ENCODE measurements at regions of chr4 and their contacts with region 1.

Region 1: DNA sequence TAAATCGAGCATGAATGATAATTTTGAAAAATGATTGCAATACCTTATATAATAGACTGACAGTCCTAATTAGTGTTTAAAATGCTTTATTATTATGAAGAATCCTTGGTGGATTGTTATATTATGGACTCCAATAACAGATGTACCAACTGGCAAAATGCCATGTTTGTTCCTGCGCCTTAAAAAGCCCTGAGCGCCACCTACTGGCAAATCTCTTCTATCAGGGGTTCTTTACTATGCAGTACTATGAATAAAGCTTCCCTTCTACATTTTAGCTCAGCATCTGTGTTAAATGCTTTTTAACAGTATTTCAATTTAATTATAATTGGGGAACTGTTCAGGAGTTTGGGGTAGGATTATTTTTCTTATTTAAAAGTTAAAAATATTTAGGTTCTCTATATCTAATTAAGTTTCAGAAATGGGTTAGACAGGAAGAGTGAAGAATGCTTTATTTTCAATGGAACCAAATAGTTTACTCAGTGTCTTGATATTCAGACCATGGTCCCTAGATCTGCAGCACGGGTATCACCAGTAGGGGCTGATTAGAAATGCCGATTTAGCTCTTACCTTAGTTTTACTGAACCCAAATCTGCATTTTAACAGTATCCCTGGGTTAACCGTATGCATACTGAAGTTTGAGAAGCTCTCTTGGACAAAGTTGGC is 20.1 kb downstream of the CFAP97 start:
- DNase-seq: peak; percentile 71 to 80 (median 76)
- H3K4me3 ChIP-seq: no peak overlapping the region
- H3K4me3 Mint-ChIP-seq: no peak overlapping the region
- H3K27ac ChIP-seq: no peak overlapping the region
- H3K27ac Mint-ChIP-seq: no peak overlapping the region
- H3K4me1 ChIP-seq: peaks cover 15% of the 10 kb centered on the region
- H3K4me1 Mint-ChIP-seq: peaks cover 20 to 56% (median 34%) of the 10 kb centered on the region in 4 donors
- H3K27me3 ChIP-seq: no peaks in the 10 kb centered on the region
- H3K27me3 Mint-ChIP-seq: no peaks in the 10 kb centered on the region

Region 2: GRCh38 chr4:185039508-185040273 is 144.1 kb before region 1 on chr4:
- CTCF ChIA-PET with region 1: interaction called, 79 read pairs
- POLR2A ChIA-PET with region 1: no interaction called
- intact Hi-C with region 1: loop called (anchors 1 kb)
- DNase-seq: peak; percentile 46 to 60 (median 56)
- H3K4me3 ChIP-seq: no peak overlapping the region
- H3K4me3 Mint-ChIP-seq: peak overlapping the region in 3 of 8 donors; percentile 1 to 35 (median 33)
- H3K27ac ChIP-seq: no peak overlapping the region
- H3K27ac Mint-ChIP-seq: no peak overlapping the region
- H3K4me1 ChIP-seq: peaks cover 7% of the 10 kb centered on the region
- H3K4me1 Mint-ChIP-seq: peaks cover 4 to 6% (median 4%) of the 10 kb centered on the region in 4 donors
- H3K27me3 ChIP-seq: no peaks in the 10 kb centered on the region
- H3K27me3 Mint-ChIP-seq: peaks cover 9 to 16% of the 10 kb centered on the region in 2 donors

Region 3: DNA sequence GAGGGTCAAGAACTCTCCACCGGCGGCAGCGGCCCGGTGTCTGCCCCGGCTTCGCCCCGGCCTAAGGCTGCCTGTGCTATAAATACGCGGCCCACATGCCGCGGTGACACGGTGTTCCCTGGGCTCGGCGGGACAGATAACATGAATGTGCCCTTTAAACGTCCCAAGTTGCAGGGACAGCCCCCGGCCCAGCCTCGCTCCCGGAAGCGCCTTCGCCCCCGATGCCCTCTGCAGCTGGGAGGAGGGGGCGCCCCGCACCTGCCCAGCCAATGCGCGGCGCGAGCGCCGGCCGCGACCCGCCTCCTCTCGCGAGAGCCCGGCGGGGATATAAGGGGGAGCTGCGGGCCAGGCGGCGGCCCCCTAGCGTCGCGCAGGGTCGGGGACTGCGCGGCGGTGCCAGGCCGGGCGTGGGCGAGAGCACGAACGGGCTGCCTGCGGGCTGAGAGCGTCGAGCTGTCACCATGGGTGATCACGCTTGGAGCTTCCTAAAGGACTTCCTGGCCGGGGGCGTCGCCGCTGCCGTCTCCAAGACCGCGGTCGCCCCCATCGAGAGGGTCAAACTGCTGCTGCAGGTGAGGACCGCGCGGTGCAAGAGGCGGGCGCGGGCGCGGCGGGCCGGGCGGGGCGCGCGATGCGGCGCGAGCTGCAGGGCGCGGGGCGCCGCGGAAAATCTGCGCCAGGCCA is 40.7 kb before region 1 on chr4 and contains the start of gene SLC25A4:
- CTCF ChIA-PET with region 1: interaction called, 45 read pairs
- POLR2A ChIA-PET with region 1: no interaction called
- intact Hi-C with region 1: loop called (anchors 2 kb)
- DNase-seq: peak; percentile 77 to 83 (median 81)
- H3K4me3 ChIP-seq: peak within 1 kb of the TSS; percentile 40 to 57
- H3K4me3 Mint-ChIP-seq: peak within 1 kb of the TSS; percentile 87 to 98 (median 90)
- H3K27ac ChIP-seq: peak within 1 kb of the TSS; percentile 26
- H3K27ac Mint-ChIP-seq: peak within 1 kb of the TSS in 6 of 7 donors; percentile 69 to 89 (median 83)
- H3K4me1 ChIP-seq: peaks cover 15% of the 10 kb centered on the region
- H3K4me1 Mint-ChIP-seq: peaks cover 8 to 24% (median 16%) of the 10 kb centered on the region in 4 donors
- H3K27me3 ChIP-seq: peaks cover 6% of the 10 kb centered on the region
- H3K27me3 Mint-ChIP-seq: peaks cover 8 to 13% of the 10 kb centered on the region in 2 donors
- total RNA-seq, gene SLC25A4: 6.4 to 7.2 TPM

Region 4: GRCh38 chr4:185171373-185172071 is 12.2 kb before region 1 on chr4:
- CTCF ChIA-PET with region 1: interaction called, 40 read pairs
- POLR2A ChIA-PET with region 1: no interaction called
- intact Hi-C with region 1: no loop called
- DNase-seq: no peak
- H3K4me3 ChIP-seq: no peak overlapping the region
- H3K4me3 Mint-ChIP-seq: no peak overlapping the region
- H3K27ac ChIP-seq: no peak overlapping the region
- H3K27ac Mint-ChIP-seq: no peak overlapping the region
- H3K4me1 ChIP-seq: peaks cover 4% of the 10 kb centered on the region
- H3K4me1 Mint-ChIP-seq: peaks cover 4 to 23% (median 8%) of the 10 kb centered on the region in 4 donors
- H3K27me3 ChIP-seq: no peaks in the 10 kb centered on the region
- H3K27me3 Mint-ChIP-seq: no peaks in the 10 kb centered on the region

Region 5: DNA sequence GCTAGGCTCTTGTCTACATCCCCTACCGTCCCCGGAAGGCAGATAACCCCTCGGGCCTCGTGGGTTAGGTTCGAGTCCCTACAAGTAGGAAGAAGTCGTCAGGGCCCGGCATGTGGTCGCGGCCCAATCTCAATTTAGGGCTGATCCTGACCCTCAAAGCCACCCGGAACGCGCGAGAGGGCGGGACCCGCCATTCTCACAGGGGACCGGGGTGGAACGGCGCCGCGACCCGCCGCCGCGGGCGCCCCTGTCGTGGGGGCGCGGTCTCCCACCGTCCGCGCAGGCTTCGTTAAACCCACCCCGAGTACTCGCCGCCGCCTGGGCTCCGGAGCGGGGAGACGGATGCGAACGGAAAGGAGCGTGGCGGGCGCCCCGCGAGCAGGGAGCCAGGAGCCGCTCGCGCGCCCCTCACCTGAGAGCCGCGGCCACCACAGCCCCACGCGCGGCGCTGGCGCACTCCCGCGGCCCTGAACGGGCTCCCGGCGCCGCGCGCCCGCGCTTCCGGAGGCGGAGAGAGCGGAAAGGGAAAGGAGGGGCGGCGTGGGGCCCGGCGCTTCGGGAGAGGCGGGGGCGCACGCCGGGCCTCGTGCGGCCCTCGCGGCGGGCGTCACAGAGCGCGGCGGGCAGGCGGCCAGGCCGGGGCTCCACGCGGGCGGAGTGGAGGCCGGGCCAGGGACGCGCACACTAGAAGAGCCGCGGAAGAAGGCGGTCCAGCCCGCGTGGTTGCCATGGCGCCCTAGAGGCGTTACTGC is 19.9 kb after region 1 on chr4 and contains the start of gene CFAP97:
- CTCF ChIA-PET with region 1: interaction called, 26 read pairs
- POLR2A ChIA-PET with region 1: interaction called, 5 read pairs
- intact Hi-C with region 1: loop called (anchors 2 kb)
- DNase-seq: peak; percentile 88 to 90 (median 90)
- H3K4me3 ChIP-seq: peak within 1 kb of the TSS; percentile 47 to 83
- H3K4me3 Mint-ChIP-seq: peak within 1 kb of the TSS; percentile 91 to 99 (median 96)
- H3K27ac ChIP-seq: peak within 1 kb of the TSS; percentile 82
- H3K27ac Mint-ChIP-seq: peak within 1 kb of the TSS; percentile 98 to 99 (median 99)
- H3K4me1 ChIP-seq: peaks cover 48% of the 10 kb centered on the region
- H3K4me1 Mint-ChIP-seq: peaks cover 31 to 66% (median 48%) of the 10 kb centered on the region in 4 donors
- H3K27me3 ChIP-seq: no peaks in the 10 kb centered on the region
- H3K27me3 Mint-ChIP-seq: no peaks in the 10 kb centered on the region
- total RNA-seq, gene CFAP97: 41.6 to 41.9 TPM

Region 6: DNA sequence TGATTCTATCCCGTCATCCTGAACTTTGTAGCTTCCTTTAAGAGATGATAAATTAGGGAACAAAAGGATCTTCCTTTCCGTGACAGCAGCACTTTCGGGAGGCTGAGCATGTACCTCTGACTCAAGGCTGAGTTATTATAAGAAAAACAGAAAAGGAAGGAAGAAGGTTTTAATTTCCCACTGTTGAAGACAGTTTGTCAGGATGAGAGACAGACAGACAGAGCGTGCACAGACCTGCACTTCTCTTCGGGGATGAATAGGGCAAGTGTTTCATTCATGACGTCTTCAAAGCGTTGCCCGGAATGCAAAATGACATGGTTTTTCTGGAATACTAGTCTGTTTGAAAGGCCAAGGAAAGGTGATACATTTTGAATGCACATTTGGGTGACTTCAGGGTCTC is 1945.2 kb after region 1 on chr4:
- CTCF ChIA-PET with region 1: no interaction called
- POLR2A ChIA-PET with region 1: no interaction called
- intact Hi-C with region 1: no loop called
- DNase-seq: no peak
- H3K4me3 ChIP-seq: no peak overlapping the region
- H3K4me3 Mint-ChIP-seq: no peak overlapping the region
- H3K27ac ChIP-seq: no peak overlapping the region
- H3K27ac Mint-ChIP-seq: no peak overlapping the region
- H3K4me1 ChIP-seq: no peaks in the 10 kb centered on the region
- H3K4me1 Mint-ChIP-seq: no peaks in the 10 kb centered on the region
- H3K27me3 ChIP-seq: no peaks in the 10 kb centered on the region
- H3K27me3 Mint-ChIP-seq: no peaks in the 10 kb centered on the region

Measured in CD4-positive, alpha-beta memory T cell (primary cell).